ENCODE measurements at regions of chr9 and their contacts with region 1.

Region 1: DNA sequence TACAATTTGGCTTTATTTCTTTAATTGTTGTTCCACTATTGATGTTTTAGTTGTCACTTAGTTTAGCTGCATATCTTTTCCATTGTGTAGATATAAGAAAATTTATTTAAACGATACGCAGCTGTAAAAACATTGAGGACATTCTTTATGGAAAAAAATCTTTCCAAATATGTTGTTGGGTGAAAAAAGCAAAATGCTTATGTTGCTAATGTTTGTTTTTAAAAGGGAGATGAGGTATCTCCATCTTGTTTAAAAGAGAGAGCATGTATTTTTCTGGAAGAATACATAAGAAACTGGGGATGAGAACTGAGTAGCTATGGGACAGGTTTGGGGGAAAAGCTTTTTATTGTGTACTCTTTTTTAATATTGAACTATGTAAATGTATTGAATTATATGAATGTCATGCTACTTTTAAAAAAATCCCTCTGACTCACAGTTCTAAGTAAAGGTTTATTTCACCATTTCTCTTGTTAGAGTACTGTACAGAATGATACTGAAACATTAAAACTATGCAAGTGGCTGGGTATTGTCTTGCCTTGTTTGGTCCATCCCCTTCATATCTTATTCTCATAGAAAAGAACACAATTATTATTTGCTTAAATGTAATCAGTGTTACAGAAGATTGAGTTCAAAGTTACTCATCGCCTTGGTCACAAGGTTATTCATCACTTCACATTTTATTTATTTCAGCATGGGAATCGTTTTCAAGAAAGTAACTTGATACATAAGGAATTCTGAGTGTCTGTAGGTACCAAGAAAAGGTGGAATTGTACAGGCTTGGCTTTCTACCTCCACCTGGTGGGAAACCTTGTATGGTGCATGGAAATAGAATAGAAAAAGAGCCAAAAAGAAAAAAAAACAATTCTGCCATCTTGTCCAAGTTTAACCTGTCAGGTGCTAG is 85.8 kb downstream of the RIC1 start:
- DNase-seq: peak; percentile 22
- ATAC-seq: no peak
- H3K4me3 ChIP-seq: no peak overlapping the region
- H3K4me3 Mint-ChIP-seq: no peak overlapping the region
- H3K27ac ChIP-seq: no peak overlapping the region
- H3K27ac Mint-ChIP-seq: no peak overlapping the region
- H3K4me1 ChIP-seq: peaks cover 3 to 7% of the 10 kb centered on the region in 2 donors
- H3K4me1 Mint-ChIP-seq: peaks cover 13% of the 10 kb centered on the region
- H3K27me3 ChIP-seq: no peaks in the 10 kb centered on the region
- H3K27me3 Mint-ChIP-seq: no peaks in the 10 kb centered on the region
- CTCF ChIP-seq: peak; percentile 46

Region 2: GRCh38 chr9:5608298-5609225 is 106.2 kb before region 1 on chr9:
- CTCF ChIA-PET with region 1: no interaction called
- POLR2A ChIA-PET with region 1: no interaction called
- intact Hi-C with region 1: loop called (anchors 10 kb)
- DNase-seq: peak; percentile 52
- ATAC-seq: peak; percentile 78
- H3K4me3 ChIP-seq: peak overlapping the region in 4 of 5 experiments; percentile 25 to 64 (median 49)
- H3K4me3 Mint-ChIP-seq: peak overlapping the region; percentile 89
- H3K27ac ChIP-seq: peak overlapping the region; percentile 8 to 74
- H3K27ac Mint-ChIP-seq: peak overlapping the region; percentile 92
- H3K4me1 ChIP-seq: peaks cover 12 to 14% of the 10 kb centered on the region in 2 donors
- H3K4me1 Mint-ChIP-seq: peaks cover 37% of the 10 kb centered on the region
- H3K27me3 ChIP-seq: no peaks in the 10 kb centered on the region
- H3K27me3 Mint-ChIP-seq: no peaks in the 10 kb centered on the region
- CTCF ChIP-seq: no peak

Region 3: GRCh38 chr9:5650356-5651105 is 64.2 kb before region 1 on chr9:
- CTCF ChIA-PET with region 1: no interaction called
- POLR2A ChIA-PET with region 1: no interaction called
- intact Hi-C with region 1: no loop called
- DNase-seq: no peak
- ATAC-seq: no peak
- H3K4me3 ChIP-seq: no peak overlapping the region
- H3K4me3 Mint-ChIP-seq: no peak overlapping the region
- H3K27ac ChIP-seq: no peak overlapping the region
- H3K27ac Mint-ChIP-seq: peak overlapping the region; percentile 41
- H3K4me1 ChIP-seq: peaks cover 0 to 13% of the 10 kb centered on the region in 2 donors
- H3K4me1 Mint-ChIP-seq: peaks cover 43% of the 10 kb centered on the region
- H3K27me3 ChIP-seq: no peaks in the 10 kb centered on the region
- H3K27me3 Mint-ChIP-seq: no peaks in the 10 kb centered on the region
- CTCF ChIP-seq: no peak

Region 4: DNA sequence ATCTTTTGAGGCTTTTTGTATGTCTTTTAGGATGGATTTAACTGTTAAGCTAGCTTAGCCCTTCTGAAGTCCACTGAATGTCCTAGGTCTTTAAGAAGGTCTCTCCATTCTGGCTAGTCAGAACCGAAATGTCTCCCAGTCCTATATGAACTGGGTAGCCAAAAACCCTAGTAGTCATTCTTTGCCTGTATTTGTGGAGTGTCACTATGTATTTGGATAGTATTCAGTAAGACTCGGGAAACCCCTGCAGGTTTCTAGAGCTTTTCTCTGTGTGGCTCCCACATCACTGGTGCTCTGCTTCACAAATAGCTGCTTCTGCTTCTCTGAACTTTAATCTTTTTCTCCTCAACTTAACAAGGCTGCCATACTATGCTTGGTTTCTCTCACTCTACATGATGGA is 17.9 kb before region 1 on chr9:
- CTCF ChIA-PET with region 1: no interaction called
- POLR2A ChIA-PET with region 1: no interaction called
- intact Hi-C with region 1: no loop called
- DNase-seq: no peak
- ATAC-seq: no peak
- H3K4me3 ChIP-seq: no peak overlapping the region
- H3K4me3 Mint-ChIP-seq: no peak overlapping the region
- H3K27ac ChIP-seq: no peak overlapping the region
- H3K27ac Mint-ChIP-seq: peak overlapping the region; percentile 28
- H3K4me1 ChIP-seq: no peaks in the 10 kb centered on the region
- H3K4me1 Mint-ChIP-seq: peaks cover 18% of the 10 kb centered on the region
- H3K27me3 ChIP-seq: no peaks in the 10 kb centered on the region
- H3K27me3 Mint-ChIP-seq: no peaks in the 10 kb centered on the region
- CTCF ChIP-seq: no peak

Region 5: GRCh38 chr9:5783982-5784381 is 69.2 kb after region 1 on chr9:
- CTCF ChIA-PET with region 1: no interaction called
- POLR2A ChIA-PET with region 1: no interaction called
- intact Hi-C with region 1: no loop called
- DNase-seq: no peak
- ATAC-seq: no peak
- H3K4me3 ChIP-seq: no peak overlapping the region
- H3K4me3 Mint-ChIP-seq: no peak overlapping the region
- H3K27ac ChIP-seq: no peak overlapping the region
- H3K27ac Mint-ChIP-seq: no peak overlapping the region
- H3K4me1 ChIP-seq: no peaks in the 10 kb centered on the region
- H3K4me1 Mint-ChIP-seq: no peaks in the 10 kb centered on the region
- H3K27me3 ChIP-seq: no peaks in the 10 kb centered on the region
- H3K27me3 Mint-ChIP-seq: no peaks in the 10 kb centered on the region
- CTCF ChIP-seq: no peak

Measured in B cell (primary cell).